Activated naive CD4-positive, alpha-beta T cell treated with anti-CD3 and anti-CD28 coated beads for 36 hours (primary cell): ENCODE measurements at regions of chr3 and their contacts with region 1.

Region 1: GRCh38 chr3:59866076-59866475 is 816.3 kb upstream of the CFAP20DC start:
- DNase-seq: no peak
- H3K4me3 Mint-ChIP-seq: no peak overlapping the region
- H3K27ac Mint-ChIP-seq: no peak overlapping the region
- H3K4me1 Mint-ChIP-seq: peaks cover 59% of the 10 kb centered on the region
- H3K27me3 Mint-ChIP-seq: no peaks in the 10 kb centered on the region

Region 2: DNA sequence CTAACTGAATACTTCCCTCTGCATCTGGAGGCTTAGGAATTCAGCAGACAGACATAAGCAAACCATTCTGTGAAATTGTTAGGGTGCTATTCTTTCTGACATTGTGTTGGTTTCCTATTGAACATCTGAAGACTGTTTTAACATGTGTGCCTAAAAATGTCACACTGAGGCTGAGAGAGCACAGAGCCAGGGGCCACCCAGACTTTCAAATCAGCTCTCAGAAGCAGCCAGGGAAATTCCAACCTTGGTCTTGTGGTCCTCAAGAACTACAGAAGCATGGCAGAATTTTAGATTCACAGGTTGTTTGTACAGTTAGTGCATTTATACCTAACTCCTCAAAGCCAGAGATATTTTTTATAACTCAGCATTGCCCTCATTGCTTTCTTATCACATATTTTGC is 112.9 kb after region 1 on chr3:
- CTCF ChIA-PET with region 1: interaction called, 3 read pairs
- intact Hi-C with region 1: loop called (anchors 1 kb)
- DNase-seq: peak; percentile 75
- H3K4me3 Mint-ChIP-seq: peak overlapping the region; percentile 39
- H3K27ac Mint-ChIP-seq: peak overlapping the region; percentile 94
- H3K4me1 Mint-ChIP-seq: peaks cover 83% of the 10 kb centered on the region
- H3K27me3 Mint-ChIP-seq: no peaks in the 10 kb centered on the region

Region 3: GRCh38 chr3:60073942-60074341 is 207.9 kb after region 1 on chr3:
- CTCF ChIA-PET with region 1: no interaction called
- intact Hi-C with region 1: loop called (anchors 5 kb)
- DNase-seq: no peak
- H3K4me3 Mint-ChIP-seq: peak overlapping the region; percentile 62
- H3K27ac Mint-ChIP-seq: peak overlapping the region; percentile 98
- H3K4me1 Mint-ChIP-seq: peaks cover 74% of the 10 kb centered on the region
- H3K27me3 Mint-ChIP-seq: no peaks in the 10 kb centered on the region

Region 4: DNA sequence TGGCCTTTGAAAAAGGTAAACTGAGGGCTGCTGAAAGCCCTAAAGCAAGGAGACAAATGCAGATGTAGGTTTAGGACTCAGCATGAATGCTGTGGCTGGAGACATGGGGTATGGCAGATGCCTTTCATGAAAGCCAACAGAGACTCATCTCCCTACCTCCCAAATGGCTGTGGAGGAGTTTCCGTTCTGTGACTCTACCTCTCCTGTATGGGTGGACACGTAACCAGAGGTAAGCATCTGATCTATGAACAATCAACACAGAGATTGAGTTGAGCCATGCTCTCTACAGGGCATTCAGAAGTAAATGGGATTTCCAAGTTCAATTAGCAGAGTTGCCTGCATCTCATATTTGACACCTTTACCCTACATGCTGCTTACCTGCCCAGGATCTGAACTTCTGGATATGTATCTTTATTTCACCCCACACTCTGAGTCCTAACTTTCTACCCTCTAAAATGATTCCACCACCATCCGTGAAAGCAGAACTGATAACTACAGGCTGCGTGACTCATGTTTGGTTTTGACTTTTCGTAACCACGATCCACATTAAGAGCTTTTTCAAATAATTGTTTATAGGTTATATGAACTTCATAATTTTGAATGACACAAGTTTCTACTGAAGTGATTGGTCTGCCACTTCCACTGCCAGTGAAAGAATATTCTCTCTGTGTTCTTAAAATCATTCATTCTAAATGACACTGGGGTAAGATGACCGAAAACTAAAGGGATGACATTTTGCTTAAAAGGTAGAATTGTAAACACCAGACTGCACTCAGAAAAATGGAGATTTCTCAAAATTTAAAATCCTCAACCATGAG is 326.4 kb after region 1 on chr3:
- CTCF ChIA-PET with region 1: no interaction called
- intact Hi-C with region 1: loop called (anchors 1 kb)
- DNase-seq: peak; percentile 58
- H3K4me3 Mint-ChIP-seq: no peak overlapping the region
- H3K27ac Mint-ChIP-seq: no peak overlapping the region
- H3K4me1 Mint-ChIP-seq: peaks cover 28% of the 10 kb centered on the region
- H3K27me3 Mint-ChIP-seq: no peaks in the 10 kb centered on the region